ENCODE measurements at regions of chr5 and their contacts with region 1.

Region 1: DNA sequence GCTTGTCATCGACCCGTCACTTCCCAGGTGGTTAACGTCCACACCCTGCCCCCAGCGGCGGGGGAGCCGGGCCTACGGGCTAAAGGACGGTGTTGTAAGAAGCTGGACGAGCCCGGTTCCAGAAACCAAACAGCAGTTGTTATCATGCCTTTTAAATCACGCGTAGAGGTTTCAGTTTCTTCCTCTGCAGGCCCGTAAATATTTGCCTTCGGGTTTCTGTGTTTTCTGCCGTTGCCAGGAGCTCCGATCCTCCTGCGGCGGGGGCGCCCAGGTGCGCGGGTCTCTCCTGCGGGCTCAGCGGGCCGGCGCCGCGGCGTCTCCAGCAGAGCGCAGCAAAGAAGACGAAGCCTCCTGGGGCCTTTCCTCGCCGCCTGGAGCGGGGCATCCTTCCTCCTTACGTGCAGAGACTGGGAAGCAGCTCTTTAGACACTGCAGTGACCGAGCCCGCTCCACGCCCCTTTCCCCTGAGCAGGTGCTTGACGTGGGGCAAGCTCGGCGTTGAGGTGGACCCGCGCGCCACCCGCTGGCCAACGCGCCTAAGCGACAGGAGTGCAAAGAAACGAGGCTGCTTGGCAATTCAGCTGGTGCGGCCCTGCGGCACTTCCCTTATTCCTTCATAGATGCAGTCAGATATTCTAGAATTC is 21.8 kb upstream of the TTC1 start:
- DNase-seq: peak; percentile 60
- H3K4me3 Mint-ChIP-seq: peak overlapping the region; percentile 53
- H3K27ac Mint-ChIP-seq: no peak overlapping the region
- H3K4me1 Mint-ChIP-seq: peaks cover 10% of the 10 kb centered on the region
- H3K27me3 Mint-ChIP-seq: peaks cover 68% of the 10 kb centered on the region

Region 2: DNA sequence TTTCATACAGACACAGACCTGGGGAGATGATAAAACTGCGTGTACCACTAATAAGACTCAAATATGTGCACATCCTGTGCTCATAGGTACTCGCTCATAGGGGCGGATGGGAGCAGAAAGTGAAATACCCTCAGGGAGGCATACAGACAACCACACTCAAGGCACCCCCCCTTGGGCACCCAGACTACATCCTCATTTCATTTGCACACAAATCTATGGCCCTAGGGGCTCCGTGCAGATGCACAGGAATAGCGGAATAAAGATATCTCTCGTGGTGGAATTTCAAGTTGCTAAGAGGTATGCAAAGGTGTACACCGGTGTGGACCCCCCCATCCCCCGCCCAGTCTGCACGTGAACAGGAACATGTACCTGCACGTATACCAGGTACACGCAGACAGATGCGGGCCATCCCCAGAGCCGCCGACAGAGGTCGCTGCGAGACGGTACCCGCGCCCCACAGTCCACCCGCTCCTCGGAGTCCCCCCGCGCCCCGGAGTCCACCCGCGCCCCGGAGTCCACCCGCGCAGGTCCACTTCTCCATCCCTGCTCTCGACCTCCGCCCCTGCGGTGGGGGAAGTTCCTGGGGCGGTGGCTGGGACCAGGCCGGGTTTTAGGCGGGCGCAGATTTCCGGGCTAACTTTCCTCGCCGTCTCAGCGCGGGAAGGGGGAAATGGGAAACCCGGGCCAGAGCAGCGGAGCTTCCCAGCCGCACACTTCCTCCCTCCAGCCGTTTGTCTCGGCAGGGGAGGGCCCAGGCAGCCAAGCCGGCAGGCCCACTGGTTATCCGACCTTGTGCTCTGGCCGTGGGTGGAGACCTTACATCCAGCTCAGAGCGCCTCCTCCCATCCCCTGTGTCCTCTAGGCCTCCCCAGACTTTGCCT is 655.8 kb before region 1 on chr5:
- intact Hi-C with region 1: loop called (anchors 5 kb)
- DNase-seq: peak; percentile 53
- H3K4me3 Mint-ChIP-seq: peak overlapping the region; percentile 72
- H3K27ac Mint-ChIP-seq: peak overlapping the region; percentile 58
- H3K4me1 Mint-ChIP-seq: peaks cover 56% of the 10 kb centered on the region
- H3K27me3 Mint-ChIP-seq: peaks cover 25% of the 10 kb centered on the region

Region 3: DNA sequence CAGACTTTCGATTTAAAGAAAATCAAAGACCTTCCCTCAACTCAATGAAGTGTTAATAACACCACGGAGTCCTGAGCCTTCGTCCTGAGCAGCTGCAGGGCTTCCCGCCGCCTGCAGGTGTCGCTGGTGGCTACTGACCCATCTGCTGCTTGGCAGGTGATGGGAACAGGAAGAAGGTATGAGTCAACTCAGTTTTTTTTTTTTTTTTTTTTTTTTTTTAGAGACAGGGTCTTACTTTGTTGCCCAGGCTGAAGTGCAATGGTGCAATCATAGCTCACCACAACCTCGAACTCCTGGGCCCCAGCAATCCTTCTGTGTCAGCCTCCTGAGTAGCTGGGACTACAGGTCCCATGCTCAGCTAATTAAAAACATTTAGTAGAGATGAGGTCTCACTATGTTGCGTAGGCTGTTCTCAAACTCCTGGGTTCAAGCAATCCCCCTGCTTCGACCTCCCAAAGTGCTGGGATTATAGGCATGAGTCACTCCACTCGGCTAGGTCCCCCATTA is 471.2 kb before region 1 on chr5:
- intact Hi-C with region 1: loop called (anchors 1 kb)
- DNase-seq: peak; percentile 53
- H3K4me3 Mint-ChIP-seq: no peak overlapping the region
- H3K27ac Mint-ChIP-seq: peak overlapping the region; percentile 41
- H3K4me1 Mint-ChIP-seq: peaks cover 12% of the 10 kb centered on the region
- H3K27me3 Mint-ChIP-seq: peaks cover 35% of the 10 kb centered on the region